ENCODE measurements at regions of chr2 and their contacts with region 1.

Region 1: DNA sequence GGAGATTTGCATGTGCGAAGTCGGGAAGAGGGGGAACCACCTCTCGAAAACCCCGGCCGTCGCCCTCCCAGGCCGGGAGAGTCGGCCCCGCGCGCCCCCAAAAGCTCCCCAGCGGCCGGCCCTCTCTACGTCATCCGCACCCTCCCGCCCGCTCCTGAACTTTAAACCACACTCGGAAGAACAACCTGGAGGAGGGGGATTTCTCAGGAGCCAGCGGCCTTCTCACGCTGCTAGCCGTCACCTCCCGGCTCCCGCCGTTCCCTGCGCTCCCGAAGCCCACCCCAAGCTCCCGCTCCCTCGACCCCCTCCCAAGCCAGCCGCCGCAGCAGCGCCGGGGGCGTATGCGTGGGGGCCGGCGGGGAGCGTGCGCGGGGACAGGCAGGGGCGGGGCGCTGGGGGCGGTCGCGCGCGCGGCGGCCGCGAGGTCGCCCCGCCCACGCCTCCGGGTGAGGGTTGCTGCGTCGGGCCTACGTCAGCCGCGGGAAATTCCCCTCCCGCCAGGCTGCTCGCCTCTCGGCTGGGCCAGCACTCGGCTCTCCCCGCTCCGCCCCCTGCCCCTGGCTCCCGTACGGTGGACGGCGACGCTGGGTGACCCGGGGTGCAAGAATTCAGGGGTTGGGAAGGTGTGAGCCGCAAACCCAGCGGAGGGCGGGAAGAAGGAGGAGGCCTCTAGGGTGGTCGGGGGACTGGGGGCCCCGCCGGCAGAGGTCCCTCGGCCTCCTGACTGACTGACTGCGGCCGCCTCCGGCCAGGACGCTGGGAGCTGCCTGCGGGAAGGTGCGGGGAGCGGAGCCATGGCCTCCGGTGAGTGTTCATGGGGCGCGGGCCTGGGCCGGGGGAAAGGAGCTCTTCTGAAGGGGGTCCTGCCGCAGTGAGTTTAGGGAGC is at the start of gene REL:
- DNase-seq: peak; percentile 72 to 96 (median 86)
- ATAC-seq: peak; percentile 85 to 93 (median 91)
- H3K4me3 ChIP-seq: peak within 1 kb of the TSS; percentile 89 to 96
- H3K4me3 Mint-ChIP-seq: peak within 1 kb of the TSS; percentile 86 to 92 (median 90)
- H3K27ac ChIP-seq: peak within 1 kb of the TSS; percentile 100
- H3K27ac Mint-ChIP-seq: peak within 1 kb of the TSS; percentile 87 to 93
- H3K4me1 ChIP-seq: peaks cover 3 to 22% of the 10 kb centered on the region in 2 experiments
- H3K4me1 Mint-ChIP-seq: peaks cover 35 to 37% (median 36%) of the 10 kb centered on the region in 3 donors
- H3K27me3 ChIP-seq: no peaks in the 10 kb centered on the region
- H3K27me3 Mint-ChIP-seq: no peaks in the 10 kb centered on the region
- total RNA-seq, gene REL: 19.9 to 69.9 (median 25.1) TPM

Region 2: GRCh38 chr2:60671966-60672365 is 209.3 kb before region 1 on chr2:
- CTCF ChIA-PET with region 1: no interaction called
- POLR2A ChIA-PET with region 1: no interaction called
- DNase-seq: no peak
- ATAC-seq: no peak
- H3K4me3 ChIP-seq: no peak overlapping the region
- H3K4me3 Mint-ChIP-seq: no peak overlapping the region
- H3K27ac ChIP-seq: no peak overlapping the region
- H3K27ac Mint-ChIP-seq: no peak overlapping the region
- H3K4me1 ChIP-seq: peaks cover 0 to 5% of the 10 kb centered on the region in 2 experiments
- H3K4me1 Mint-ChIP-seq: peaks cover 0 to 4% (median 2%) of the 10 kb centered on the region in 3 donors
- H3K27me3 ChIP-seq: peaks cover 0 to 7% of the 10 kb centered on the region in 2 experiments
- H3K27me3 Mint-ChIP-seq: peaks cover 4 to 5% of the 10 kb centered on the region in 2 donors

Region 3: GRCh38 chr2:60756191-60757041 is 124.9 kb before region 1 on chr2 and contains the start of gene PAPOLG:
- CTCF ChIA-PET with region 1: no interaction called
- POLR2A ChIA-PET with region 1: interaction called, 10 to 14 read pairs
- DNase-seq: peak; percentile 89 to 98 (median 96)
- ATAC-seq: peak; percentile 98 to 100 (median 99)
- H3K4me3 ChIP-seq: peak within 1 kb of the TSS; percentile 94 to 96
- H3K4me3 Mint-ChIP-seq: peak within 1 kb of the TSS; percentile 98 to 100 (median 100)
- H3K27ac ChIP-seq: peak within 1 kb of the TSS; percentile 82
- H3K27ac Mint-ChIP-seq: peak within 1 kb of the TSS; percentile 99 to 100
- H3K4me1 ChIP-seq: peaks cover 12 to 13% of the 10 kb centered on the region in 2 experiments
- H3K4me1 Mint-ChIP-seq: peaks cover 43 to 50% (median 43%) of the 10 kb centered on the region in 3 donors
- H3K27me3 ChIP-seq: peaks cover 0 to 2% of the 10 kb centered on the region in 2 experiments
- H3K27me3 Mint-ChIP-seq: no peaks in the 10 kb centered on the region
- total RNA-seq, gene PAPOLG: 20.6 to 34.8 (median 29.6) TPM

Region 4: GRCh38 chr2:60775048-60775639 is 106.1 kb before region 1 on chr2:
- CTCF ChIA-PET with region 1: no interaction called
- POLR2A ChIA-PET with region 1: interaction called in 1 of 2 experiments, 11 read pairs
- DNase-seq: no peak
- ATAC-seq: no peak
- H3K4me3 ChIP-seq: no peak overlapping the region
- H3K4me3 Mint-ChIP-seq: no peak overlapping the region
- H3K27ac ChIP-seq: no peak overlapping the region
- H3K27ac Mint-ChIP-seq: no peak overlapping the region
- H3K4me1 ChIP-seq: no peaks in the 10 kb centered on the region
- H3K4me1 Mint-ChIP-seq: peaks cover 0 to 3% (median under 1%) of the 10 kb centered on the region in 3 donors
- H3K27me3 ChIP-seq: no peaks in the 10 kb centered on the region
- H3K27me3 Mint-ChIP-seq: no peaks in the 10 kb centered on the region

Region 5: DNA sequence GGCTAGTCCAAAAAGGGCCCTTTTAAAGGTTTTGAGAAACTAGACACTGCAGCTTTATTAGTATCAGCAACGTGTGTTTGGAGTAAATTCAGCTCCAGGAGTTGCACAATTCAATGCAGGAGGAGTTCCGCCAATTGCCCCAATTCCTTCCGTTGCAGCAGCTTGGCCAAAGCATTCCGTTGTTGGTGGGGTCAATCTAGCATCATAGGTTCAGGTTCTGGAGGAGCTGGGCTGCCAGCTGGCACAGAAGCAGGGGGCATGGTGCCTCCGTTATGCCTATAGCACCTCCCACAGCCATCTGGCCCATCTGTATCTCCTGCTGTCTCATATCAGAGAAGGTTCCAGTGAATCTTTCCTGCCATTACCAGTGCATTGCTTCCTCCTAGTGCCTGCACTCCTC is 55.5 kb after region 1 on chr2:
- CTCF ChIA-PET with region 1: no interaction called
- POLR2A ChIA-PET with region 1: no interaction called
- DNase-seq: no peak
- ATAC-seq: no peak
- H3K4me3 ChIP-seq: no peak overlapping the region
- H3K4me3 Mint-ChIP-seq: no peak overlapping the region
- H3K27ac ChIP-seq: no peak overlapping the region
- H3K27ac Mint-ChIP-seq: no peak overlapping the region
- H3K4me1 ChIP-seq: no peaks in the 10 kb centered on the region
- H3K4me1 Mint-ChIP-seq: peaks cover 6 to 19% (median 9%) of the 10 kb centered on the region in 3 donors
- H3K27me3 ChIP-seq: no peaks in the 10 kb centered on the region
- H3K27me3 Mint-ChIP-seq: no peaks in the 10 kb centered on the region

Region 6: DNA sequence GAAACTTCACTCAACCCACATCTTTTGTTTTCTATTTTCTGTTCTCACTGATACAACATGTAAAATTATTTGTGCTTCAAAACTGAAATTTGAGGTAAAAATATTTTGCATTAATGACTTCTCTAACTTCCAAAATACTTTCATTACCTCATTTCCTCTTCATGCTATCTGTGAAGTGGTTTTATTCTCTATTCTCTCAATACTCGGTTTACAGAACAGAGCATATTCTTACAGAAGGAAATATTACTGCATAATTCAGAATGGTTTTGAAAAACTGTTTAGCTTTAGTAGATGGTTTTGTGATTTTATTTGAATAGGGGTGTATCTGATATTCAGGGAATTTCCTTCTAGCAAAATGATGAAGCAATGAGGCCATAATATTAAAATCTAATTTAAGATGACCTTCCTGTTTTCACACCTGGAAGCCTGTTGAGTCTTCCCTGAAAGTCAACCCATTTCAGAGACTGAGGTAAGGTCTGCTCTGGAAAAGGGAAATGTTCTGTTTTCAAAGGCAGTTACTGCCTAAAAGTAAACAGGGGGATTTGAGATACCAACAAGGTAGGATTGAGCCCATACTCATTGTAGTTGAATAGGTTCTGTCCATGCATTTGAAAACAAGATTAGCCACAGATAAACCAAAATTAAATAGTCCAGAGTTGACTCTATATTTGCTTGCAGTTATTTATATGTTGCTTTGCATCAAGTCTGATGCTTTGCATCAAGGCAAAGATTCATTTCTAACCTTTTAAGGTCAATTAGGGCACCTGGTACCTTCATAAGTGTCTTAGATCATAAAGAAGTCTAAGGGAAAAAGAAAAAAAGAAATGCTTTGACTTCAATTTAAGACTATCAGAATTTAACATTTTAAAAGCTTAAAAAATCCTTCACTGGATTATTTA is 85.5 kb after region 1 on chr2:
- CTCF ChIA-PET with region 1: interaction called in 1 of 2 experiments, 5 read pairs
- POLR2A ChIA-PET with region 1: interaction called in 1 of 2 experiments, 13 read pairs
- DNase-seq: peak in 1 of 35 experiments; percentile 16
- ATAC-seq: peak in 2 of 4 experiments; percentile 36 to 70
- H3K4me3 ChIP-seq: no peak overlapping the region
- H3K4me3 Mint-ChIP-seq: peak overlapping the region in 2 of 3 donors; percentile 55 to 67
- H3K27ac ChIP-seq: peak overlapping the region; percentile 77
- H3K27ac Mint-ChIP-seq: peak overlapping the region; percentile 26 to 89
- H3K4me1 ChIP-seq: peaks cover 9 to 26% of the 10 kb centered on the region in 2 experiments
- H3K4me1 Mint-ChIP-seq: peaks cover 37 to 52% (median 50%) of the 10 kb centered on the region in 3 donors
- H3K27me3 ChIP-seq: no peaks in the 10 kb centered on the region
- H3K27me3 Mint-ChIP-seq: no peaks in the 10 kb centered on the region

Region 7: GRCh38 chr2:61910603-61911002 is 1029.3 kb after region 1 on chr2:
- CTCF ChIA-PET with region 1: interaction called in 1 of 2 experiments, 3 read pairs
- POLR2A ChIA-PET with region 1: interaction called in 1 of 2 experiments, 13 read pairs
- DNase-seq: no peak
- ATAC-seq: no peak
- H3K4me3 ChIP-seq: no peak overlapping the region
- H3K4me3 Mint-ChIP-seq: no peak overlapping the region
- H3K27ac ChIP-seq: no peak overlapping the region
- H3K27ac Mint-ChIP-seq: no peak overlapping the region
- H3K4me1 ChIP-seq: peaks cover 0 to 3% of the 10 kb centered on the region in 2 experiments
- H3K4me1 Mint-ChIP-seq: peaks cover 18 to 28% (median 28%) of the 10 kb centered on the region in 3 donors
- H3K27me3 ChIP-seq: no peaks in the 10 kb centered on the region
- H3K27me3 Mint-ChIP-seq: no peaks in the 10 kb centered on the region